Activated naive CD4-positive, alpha-beta T cell treated with anti-CD3 and anti-CD28 coated beads for 36 hours (primary cell): ENCODE measurements at regions of chr1 and their contacts with region 1.

Region 1: DNA sequence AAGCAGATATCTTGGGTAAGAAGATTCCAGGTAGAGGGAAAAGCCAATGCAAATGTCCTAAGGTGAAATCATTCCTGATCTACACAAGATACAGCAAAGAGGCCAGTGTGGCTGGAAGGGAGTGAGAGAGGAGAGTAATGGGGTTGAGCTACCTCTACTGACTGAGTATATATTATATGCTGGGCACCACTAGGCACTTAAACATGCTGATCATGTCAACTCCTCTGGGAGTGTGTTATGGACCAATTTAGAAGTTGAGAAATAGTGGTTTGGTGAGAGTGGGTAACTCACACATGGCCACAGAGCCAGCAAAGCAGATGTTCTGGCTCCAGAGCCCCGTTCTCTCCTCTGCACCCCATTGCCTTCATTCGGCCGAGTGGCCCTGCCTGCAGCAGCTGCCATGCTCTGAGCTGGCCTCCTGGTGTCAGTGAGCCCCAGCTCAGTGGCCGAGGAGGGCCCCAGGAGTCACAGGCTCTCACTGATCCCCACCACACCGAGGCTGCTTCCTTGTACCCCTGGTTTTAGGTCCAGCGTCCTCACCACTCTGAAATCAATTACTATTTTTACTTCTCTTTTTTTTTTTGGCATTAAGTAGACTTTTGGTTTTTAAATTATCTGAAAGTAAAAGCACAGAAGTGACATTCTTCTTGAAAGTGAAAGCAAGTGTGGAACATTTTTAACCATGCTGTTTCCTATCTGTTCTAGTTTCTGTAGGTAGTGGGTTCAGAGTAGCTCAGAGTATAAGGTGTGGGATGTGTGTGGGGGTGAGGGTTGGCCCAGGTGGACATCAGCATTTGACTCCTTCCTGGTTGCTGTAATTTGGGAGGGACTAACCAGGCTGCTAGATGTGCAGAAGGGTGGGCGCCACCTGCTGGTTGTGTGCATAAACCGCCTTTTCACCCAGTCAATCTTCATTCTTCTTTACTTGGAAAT is 45.8 kb upstream of the CRNN start:
- DNase-seq: peak; percentile 80
- H3K4me3 Mint-ChIP-seq: peak overlapping the region; percentile 57
- H3K27ac Mint-ChIP-seq: peak overlapping the region; percentile 73
- H3K4me1 Mint-ChIP-seq: peaks cover 31% of the 10 kb centered on the region
- H3K27me3 Mint-ChIP-seq: no peaks in the 10 kb centered on the region

Region 2: GRCh38 chr1:152047730-152048402 is 412.0 kb before region 1 on chr1:
- CTCF ChIA-PET with region 1: interaction called, 18 read pairs
- intact Hi-C with region 1: loop called (anchors 1 kb)
- DNase-seq: peak; percentile 94
- H3K4me3 Mint-ChIP-seq: peak overlapping the region; percentile 67
- H3K27ac Mint-ChIP-seq: peak overlapping the region; percentile 98
- H3K4me1 Mint-ChIP-seq: peaks cover 19% of the 10 kb centered on the region
- H3K27me3 Mint-ChIP-seq: peaks cover 2% of the 10 kb centered on the region

Region 3: DNA sequence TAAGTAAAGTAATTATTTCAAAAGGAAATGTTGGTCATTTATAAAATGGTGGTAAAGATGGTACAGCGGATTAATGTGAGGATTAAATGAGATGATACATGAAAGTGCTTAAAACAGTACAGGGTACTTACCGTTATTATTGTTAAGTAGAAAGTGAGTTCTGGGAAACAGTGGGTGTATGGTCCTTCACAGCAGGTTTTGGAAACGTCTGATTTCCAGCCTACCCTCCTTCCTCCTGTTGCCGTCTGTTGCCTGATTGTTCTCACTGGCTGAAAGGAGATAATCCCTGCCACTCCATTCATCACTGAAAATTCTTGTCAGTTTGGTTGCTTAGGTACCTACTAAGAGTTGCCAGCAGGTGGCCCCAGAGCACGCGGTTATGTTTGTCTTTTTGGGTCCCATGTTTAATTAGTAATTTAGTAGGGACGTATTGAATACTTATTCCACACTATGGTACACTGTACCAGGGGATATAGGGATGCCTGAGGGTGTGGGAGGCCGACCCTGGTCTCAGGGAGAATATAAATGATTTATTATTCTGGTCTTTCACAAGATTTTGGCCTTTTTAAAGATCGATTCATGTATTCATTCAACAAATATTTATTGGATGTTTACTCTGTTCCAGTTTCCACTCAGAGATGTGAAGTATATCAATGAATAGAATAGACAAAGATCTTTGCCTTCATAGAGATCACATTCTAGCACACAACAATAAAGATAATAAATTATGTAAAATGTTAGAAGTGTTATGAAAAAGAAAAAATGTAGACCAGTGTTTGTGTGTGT is 270.0 kb before region 1 on chr1:
- CTCF ChIA-PET with region 1: interaction called, 136 read pairs
- intact Hi-C with region 1: loop called (anchors 1 kb)
- DNase-seq: peak; percentile 84
- H3K4me3 Mint-ChIP-seq: peak overlapping the region; percentile 66
- H3K27ac Mint-ChIP-seq: no peak overlapping the region
- H3K4me1 Mint-ChIP-seq: peaks cover 6% of the 10 kb centered on the region
- H3K27me3 Mint-ChIP-seq: peaks cover 4% of the 10 kb centered on the region

Region 4: GRCh38 chr1:152347116-152347728 is 112.6 kb before region 1 on chr1:
- CTCF ChIA-PET with region 1: interaction called, 27 read pairs
- intact Hi-C with region 1: loop called (anchors 1 kb)
- DNase-seq: peak; percentile 72
- H3K4me3 Mint-ChIP-seq: no peak overlapping the region
- H3K27ac Mint-ChIP-seq: no peak overlapping the region
- H3K4me1 Mint-ChIP-seq: peaks cover 7% of the 10 kb centered on the region
- H3K27me3 Mint-ChIP-seq: peaks cover 21% of the 10 kb centered on the region

Region 5: DNA sequence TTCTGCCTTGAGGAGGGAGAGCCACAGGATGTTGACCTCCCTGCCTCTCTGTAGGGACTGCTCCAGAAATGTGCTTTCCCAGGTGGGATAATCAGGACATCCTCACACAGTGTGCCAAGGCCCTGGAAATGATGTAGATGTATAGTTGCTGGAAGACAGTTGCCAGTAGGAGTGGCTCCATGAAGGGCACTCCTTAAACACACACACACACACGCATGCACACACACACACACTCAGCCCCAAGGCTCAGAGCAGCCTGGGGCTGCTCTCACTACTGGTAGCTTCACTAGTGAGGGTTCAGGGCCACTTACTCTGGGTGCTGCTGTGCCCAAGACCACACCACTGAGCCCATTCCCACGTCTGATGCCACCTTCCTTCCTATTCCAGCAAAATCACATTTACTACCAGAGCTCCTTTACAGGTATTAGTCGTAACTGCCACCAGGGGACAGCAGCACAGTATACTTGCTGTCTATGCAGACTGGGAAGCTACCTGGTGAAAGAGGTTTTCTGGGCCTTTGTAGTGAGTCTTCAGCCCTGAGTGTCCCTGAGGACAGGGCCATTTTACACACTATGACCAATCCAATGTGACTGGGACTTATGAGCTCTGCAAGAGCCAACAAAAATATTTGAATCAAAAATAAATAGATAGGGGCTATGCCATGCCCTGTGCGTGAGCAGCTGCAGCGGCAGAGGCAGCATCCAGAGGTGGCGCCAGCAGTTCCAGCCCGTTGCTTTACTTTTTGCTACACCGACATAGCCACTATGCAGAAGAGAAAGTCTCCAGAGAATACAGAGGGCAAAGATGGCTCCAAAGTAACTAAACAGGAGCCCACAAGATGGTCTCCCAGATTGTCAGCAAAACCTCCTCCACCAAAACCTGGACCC is 60.8 kb before region 1 on chr1:
- CTCF ChIA-PET with region 1: interaction called, 27 read pairs
- intact Hi-C with region 1: loop called (anchors 1 kb)
- DNase-seq: peak; percentile 22
- H3K4me3 Mint-ChIP-seq: no peak overlapping the region
- H3K27ac Mint-ChIP-seq: no peak overlapping the region
- H3K4me1 Mint-ChIP-seq: no peaks in the 10 kb centered on the region
- H3K27me3 Mint-ChIP-seq: peaks cover 14% of the 10 kb centered on the region

Region 6: DNA sequence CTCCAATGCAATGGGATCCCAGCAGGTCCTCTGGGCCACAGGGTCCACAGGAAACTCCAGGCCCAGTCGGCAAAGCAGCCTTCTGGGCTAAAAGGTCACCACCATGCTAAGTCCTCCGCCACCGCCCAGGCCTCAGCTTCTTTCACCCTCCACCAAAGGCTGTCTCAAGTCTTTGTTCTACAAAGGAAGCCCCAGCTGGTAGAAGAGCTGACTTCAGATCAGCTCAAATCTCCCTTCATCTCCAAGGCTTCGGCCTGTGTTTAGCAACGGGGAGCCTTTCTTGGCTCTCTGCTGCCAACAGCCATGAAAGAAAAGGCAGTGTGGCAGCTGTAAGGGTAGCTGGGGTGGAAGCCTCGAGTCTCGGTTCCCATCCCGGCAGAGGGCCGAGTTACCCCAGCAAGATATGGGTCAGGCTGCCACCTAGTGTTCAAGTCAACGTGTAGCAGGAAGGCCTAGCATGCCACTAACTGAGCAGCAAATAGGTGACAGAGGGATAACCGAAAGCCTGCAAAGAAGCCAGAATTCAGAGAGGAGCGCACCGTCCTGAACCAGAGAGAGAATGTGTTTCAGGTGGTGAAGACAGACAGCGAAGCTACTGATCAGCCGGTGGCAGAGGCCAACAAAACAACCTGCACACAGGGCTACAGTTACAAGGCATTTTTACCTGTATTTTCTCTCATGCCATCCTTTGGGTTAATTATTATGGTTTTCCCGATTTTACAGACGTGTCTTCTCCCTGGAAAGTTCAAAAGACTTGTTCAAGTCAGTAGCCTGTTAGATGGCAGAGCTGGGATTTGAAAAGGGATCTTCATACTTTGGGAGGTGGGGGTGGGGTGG is 19.0 kb before region 1 on chr1:
- CTCF ChIA-PET with region 1: interaction called, 44 read pairs
- intact Hi-C with region 1: loop called (anchors 1 kb)
- DNase-seq: peak; percentile 82
- H3K4me3 Mint-ChIP-seq: no peak overlapping the region
- H3K27ac Mint-ChIP-seq: no peak overlapping the region
- H3K4me1 Mint-ChIP-seq: no peaks in the 10 kb centered on the region
- H3K27me3 Mint-ChIP-seq: peaks cover 17% of the 10 kb centered on the region

Region 7: GRCh38 chr1:152473887-152474537 is 14.2 kb after region 1 on chr1:
- CTCF ChIA-PET with region 1: interaction called, 12 read pairs
- intact Hi-C with region 1: no loop called
- DNase-seq: no peak
- H3K4me3 Mint-ChIP-seq: no peak overlapping the region
- H3K27ac Mint-ChIP-seq: no peak overlapping the region
- H3K4me1 Mint-ChIP-seq: no peaks in the 10 kb centered on the region
- H3K27me3 Mint-ChIP-seq: peaks cover 11% of the 10 kb centered on the region